HCT116 (cell line): ENCODE measurements at regions of chr17 and their contacts with region 1.

Region 1: DNA sequence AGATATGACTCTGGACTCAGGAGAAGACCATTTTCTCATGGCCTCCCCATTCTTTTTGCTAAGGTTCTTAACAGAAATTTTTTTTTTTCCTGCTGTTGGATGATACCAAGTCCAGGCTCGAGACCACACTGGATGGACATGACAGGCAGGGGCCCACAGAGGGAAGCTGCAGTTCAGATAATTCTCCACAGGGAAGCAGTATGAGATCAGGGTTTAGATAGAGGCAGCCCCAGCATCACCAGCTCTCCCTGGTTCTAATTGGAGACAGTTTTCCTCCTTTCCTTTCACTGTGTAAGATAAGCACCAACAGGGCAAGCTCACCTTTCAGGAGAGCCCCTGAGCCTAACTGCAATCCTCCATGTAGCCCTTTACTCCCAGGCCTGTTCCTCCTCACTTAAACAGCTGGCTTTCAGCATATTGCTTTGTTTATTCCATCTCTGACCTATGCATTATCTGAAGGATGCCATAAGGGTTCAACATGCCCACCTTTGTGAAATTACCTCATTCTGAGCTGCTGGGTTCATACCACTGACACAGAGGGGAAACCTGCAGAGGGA is 108.1 kb downstream of the SNX11 start:
- DNase-seq: peak; percentile 71
- ATAC-seq: peak; percentile 99
- H3K4me3 ChIP-seq: no peak overlapping the region
- H3K27ac ChIP-seq: no peak overlapping the region
- H3K4me1 ChIP-seq: peaks cover 0 to 16% of the 10 kb centered on the region in 2 experiments; a peak in 1 of 4 replicates
- H3K27me3 ChIP-seq: no peaks in the 10 kb centered on the region
- CTCF ChIP-seq: peak; percentile 80 to 94 (median 91)
- POLR2A ChIP-seq: no peak
- RAD21 ChIP-seq: peak; percentile 98

Region 2: GRCh38 chr17:48181653-48182052 is 34.0 kb before region 1 on chr17:
- CTCF ChIA-PET with region 1: interaction called, 12 read pairs
- POLR2A ChIA-PET with region 1: no interaction called
- RAD21 ChIA-PET with region 1: interaction called in 1 of 2 experiments, 6 read pairs
- intact Hi-C with region 1: no loop called
- DNase-seq: peak; percentile 44
- ATAC-seq: peak; percentile 96
- H3K4me3 ChIP-seq: no peak overlapping the region
- H3K27ac ChIP-seq: no peak overlapping the region
- H3K4me1 ChIP-seq: no peaks in the 10 kb centered on the region
- H3K27me3 ChIP-seq: no peaks in the 10 kb centered on the region
- CTCF ChIP-seq: peak; percentile 73 to 86 (median 83); a peak in 5 of 6 replicates
- POLR2A ChIP-seq: no peak
- RAD21 ChIP-seq: peak; percentile 88

Region 3: DNA sequence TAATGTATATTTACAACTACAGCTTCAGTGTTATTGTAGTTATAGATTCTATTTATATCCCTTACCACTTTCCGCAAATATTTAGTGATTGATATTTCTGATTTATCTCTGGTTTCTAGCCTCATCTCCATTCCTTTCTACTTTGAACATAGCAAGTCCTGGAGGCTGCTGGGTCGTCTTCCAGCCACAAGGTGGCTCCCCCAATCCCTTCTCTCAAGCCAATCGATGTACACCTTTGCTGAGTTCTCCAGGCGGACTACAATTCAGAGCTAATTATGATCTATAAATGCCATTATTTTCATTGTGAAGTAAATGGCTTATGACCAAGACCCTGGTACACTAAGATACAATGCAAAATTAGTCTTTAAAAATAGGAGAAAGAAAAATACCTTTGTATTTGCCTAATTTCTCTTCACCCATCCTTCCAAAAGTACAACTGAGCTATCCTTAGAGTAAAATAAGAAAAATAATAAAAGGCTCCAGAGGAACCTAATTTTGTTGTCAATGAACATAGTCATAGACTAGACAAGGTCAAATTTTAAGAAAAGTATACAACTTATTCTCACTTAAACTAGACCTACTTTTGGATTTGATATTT is 92.3 kb after region 1 on chr17:
- CTCF ChIA-PET with region 1: interaction called, 26 read pairs
- POLR2A ChIA-PET with region 1: no interaction called
- RAD21 ChIA-PET with region 1: interaction called in 1 of 2 experiments, 4 read pairs
- intact Hi-C with region 1: no loop called
- DNase-seq: peak; percentile 78
- ATAC-seq: peak; percentile 100
- H3K4me3 ChIP-seq: no peak overlapping the region
- H3K27ac ChIP-seq: no peak overlapping the region
- H3K4me1 ChIP-seq: no peaks in the 10 kb centered on the region
- H3K27me3 ChIP-seq: no peaks in the 10 kb centered on the region
- CTCF ChIP-seq: peak; percentile 81 to 99 (median 98)
- POLR2A ChIP-seq: no peak
- RAD21 ChIP-seq: peak; percentile 75

Region 4: GRCh38 chr17:48351831-48352332 is 136.2 kb after region 1 on chr17:
- CTCF ChIA-PET with region 1: interaction called, 33 read pairs
- POLR2A ChIA-PET with region 1: no interaction called
- RAD21 ChIA-PET with region 1: interaction called, 3 to 4 read pairs
- intact Hi-C with region 1: no loop called
- DNase-seq: peak; percentile 46
- ATAC-seq: peak; percentile 69
- H3K4me3 ChIP-seq: no peak overlapping the region
- H3K27ac ChIP-seq: no peak overlapping the region
- H3K4me1 ChIP-seq: peaks cover 4 to 9% of the 10 kb centered on the region in 2 experiments
- H3K27me3 ChIP-seq: no peaks in the 10 kb centered on the region
- CTCF ChIP-seq: peak; percentile 67 to 90 (median 80); a peak in 5 of 6 replicates
- POLR2A ChIP-seq: no peak
- RAD21 ChIP-seq: peak; percentile 76

Region 5: GRCh38 chr17:48618256-48618897 is 402.7 kb after region 1 on chr17:
- CTCF ChIA-PET with region 1: interaction called, 21 read pairs
- POLR2A ChIA-PET with region 1: interaction called, 6 read pairs
- RAD21 ChIA-PET with region 1: interaction called in 1 of 2 experiments, 7 read pairs
- intact Hi-C with region 1: loop called (anchors 1 kb)
- DNase-seq: peak; percentile 74
- ATAC-seq: peak; percentile 71
- H3K4me3 ChIP-seq: peak overlapping the region; percentile 80 to 90
- H3K27ac ChIP-seq: peak overlapping the region; percentile 88
- H3K4me1 ChIP-seq: peaks cover 8 to 37% of the 10 kb centered on the region in 2 experiments; a peak in 3 of 4 replicates
- H3K27me3 ChIP-seq: no peaks in the 10 kb centered on the region
- CTCF ChIP-seq: peak; percentile 97 to 100 (median 98); a peak in 5 of 6 replicates
- POLR2A ChIP-seq: no peak
- RAD21 ChIP-seq: peak; percentile 99